Dorsolateral prefrontal cortex (tissue), 120 donors: ENCODE measurements at regions of chr9 and their contacts with region 1.

Region 1: DNA sequence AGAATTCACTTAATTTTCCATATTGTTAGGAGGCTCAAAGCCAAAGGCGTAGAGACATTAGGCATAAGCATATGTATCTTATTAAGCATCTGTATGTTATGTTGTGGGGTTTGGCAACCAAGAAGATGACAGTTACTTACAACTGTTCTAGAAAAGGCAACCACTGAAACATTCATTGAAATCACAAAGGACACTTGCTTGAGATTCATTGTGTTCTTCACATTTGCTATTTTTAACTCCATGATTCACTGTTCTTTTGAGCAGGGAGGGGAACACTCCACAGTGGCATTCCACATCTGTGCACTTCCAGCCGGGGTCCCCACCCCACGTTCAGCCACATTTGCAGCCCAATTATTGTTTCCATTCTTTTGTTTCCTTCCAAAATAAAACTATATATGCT is 107.1 kb downstream of the PALM2AKAP2 start:
- DNase-seq: no peak
- H3K4me3 ChIP-seq: peak overlapping the region in 5 of 59 donors; percentile 3 to 24 (median 18)
- H3K27ac ChIP-seq: peak overlapping the region in 58 of 59 donors; percentile 44 to 94 (median 85)
- H3K27me3 ChIP-seq: no peaks in the 10 kb centered on the region
- CTCF ChIP-seq: no peak

Region 2: DNA sequence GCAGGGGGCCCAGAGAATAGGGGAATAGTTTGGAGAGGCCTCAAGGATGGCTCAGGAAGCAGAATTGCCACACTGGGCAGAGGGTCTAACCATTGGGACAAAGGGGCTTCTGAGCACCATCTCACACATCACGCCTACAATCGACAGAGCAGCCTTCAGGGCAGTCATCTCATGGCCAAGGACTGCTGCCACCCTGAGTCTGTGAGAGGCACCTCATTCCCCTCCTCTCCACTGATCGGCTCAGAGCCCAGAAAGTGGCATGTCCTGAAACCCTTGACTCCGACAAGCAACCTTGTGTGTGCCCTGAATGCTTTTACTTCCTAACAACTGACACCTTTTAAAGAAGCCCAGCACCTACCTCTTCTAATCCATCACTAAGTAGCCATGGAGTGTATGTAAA is 260.0 kb before region 1 on chr9:
- intact Hi-C with region 1: no loop called
- DNase-seq: peak in 7 of 10 donors; percentile 28 to 51 (median 36)
- H3K4me3 ChIP-seq: no peak overlapping the region
- H3K27ac ChIP-seq: peak overlapping the region in 5 of 59 donors; percentile 21 to 39 (median 36)
- H3K27me3 ChIP-seq: peaks cover 0 to 3% (median 0%) of the 10 kb centered on the region in 45 donors
- CTCF ChIP-seq: peak in 26 of 56 donors; percentile 8 to 44 (median 26)

Region 3: GRCh38 chr9:109856785-109857184 is 30.3 kb before region 1 on chr9:
- intact Hi-C with region 1: loop called in 1 of 2 experiments (anchors 2 kb)
- DNase-seq: peak; percentile 25 to 96 (median 89)
- H3K4me3 ChIP-seq: peak overlapping the region in 7 of 59 donors; percentile 2 to 36 (median 10)
- H3K27ac ChIP-seq: peak overlapping the region; percentile 77 to 99 (median 96)
- H3K27me3 ChIP-seq: no peaks in the 10 kb centered on the region
- CTCF ChIP-seq: peak in 4 of 56 donors; percentile 7 to 34 (median 20)

Region 4: GRCh38 chr9:109868207-109868606 is 18.9 kb before region 1 on chr9:
- intact Hi-C with region 1: loop called in 1 of 2 experiments (anchors 1 kb)
- DNase-seq: peak in 7 of 10 donors; percentile 47 to 74 (median 67)
- H3K4me3 ChIP-seq: peak overlapping the region; percentile 36 to 74 (median 55)
- H3K27ac ChIP-seq: peak overlapping the region; percentile 52 to 99 (median 94)
- H3K27me3 ChIP-seq: no peaks in the 10 kb centered on the region
- CTCF ChIP-seq: no peak